CD8-positive, alpha-beta T cell (primary cell): ENCODE measurements at regions of chr12 and their contacts with region 1.

Region 1: GRCh38 chr12:68446893-68447796 is 115.0 kb upstream of the MDM1 start:
- DNase-seq: no peak
- ATAC-seq: no peak
- H3K4me3 ChIP-seq: no peak overlapping the region
- H3K4me3 Mint-ChIP-seq: no peak overlapping the region
- H3K27ac ChIP-seq: peak overlapping the region in 1 of 2 experiments; percentile 63
- H3K27ac Mint-ChIP-seq: no peak overlapping the region
- H3K4me1 ChIP-seq: peaks cover 46% of the 10 kb centered on the region
- H3K4me1 Mint-ChIP-seq: peaks cover 63% of the 10 kb centered on the region
- H3K27me3 ChIP-seq: no peaks in the 10 kb centered on the region
- H3K27me3 Mint-ChIP-seq: no peaks in the 10 kb centered on the region
- CTCF ChIP-seq: no peak

Region 2: GRCh38 chr12:68374307-68374982 is 72.7 kb before region 1 on chr12:
- CTCF ChIA-PET with region 1: no interaction called
- POLR2A ChIA-PET with region 1: no interaction called
- intact Hi-C with region 1: loop called in 1 of 2 experiments (anchors 5 kb)
- DNase-seq: peak in 5 of 9 experiments; percentile 15 to 71 (median 52)
- ATAC-seq: peak; percentile 85
- H3K4me3 ChIP-seq: no peak overlapping the region
- H3K4me3 Mint-ChIP-seq: peak overlapping the region; percentile 32
- H3K27ac ChIP-seq: no peak overlapping the region
- H3K27ac Mint-ChIP-seq: peak overlapping the region; percentile 63
- H3K4me1 ChIP-seq: peaks cover 22% of the 10 kb centered on the region
- H3K4me1 Mint-ChIP-seq: peaks cover 44% of the 10 kb centered on the region
- H3K27me3 ChIP-seq: no peaks in the 10 kb centered on the region
- H3K27me3 Mint-ChIP-seq: no peaks in the 10 kb centered on the region
- CTCF ChIP-seq: no peak

Region 3: DNA sequence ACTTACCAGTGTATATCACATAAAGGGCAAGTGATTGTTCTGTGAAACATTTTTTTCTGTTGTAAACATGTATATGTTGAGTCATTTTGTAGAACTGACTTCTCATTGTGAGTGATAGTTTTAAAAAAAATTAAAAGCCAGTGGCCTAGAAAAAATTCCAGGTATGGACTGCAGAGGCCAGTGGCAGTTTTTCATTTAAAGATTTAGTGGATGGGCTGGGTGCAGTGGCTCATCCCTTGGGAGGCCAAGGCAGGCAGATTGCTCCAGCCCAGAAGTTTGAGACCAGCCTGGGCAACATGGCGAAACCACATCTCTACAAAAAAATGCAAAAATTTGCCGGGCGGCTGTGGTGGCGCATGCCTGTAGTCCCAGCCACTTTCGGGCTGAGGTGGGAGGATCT is 30.3 kb before region 1 on chr12:
- CTCF ChIA-PET with region 1: no interaction called
- POLR2A ChIA-PET with region 1: no interaction called
- intact Hi-C with region 1: no loop called
- DNase-seq: no peak
- ATAC-seq: no peak
- H3K4me3 ChIP-seq: no peak overlapping the region
- H3K4me3 Mint-ChIP-seq: no peak overlapping the region
- H3K27ac ChIP-seq: no peak overlapping the region
- H3K27ac Mint-ChIP-seq: no peak overlapping the region
- H3K4me1 ChIP-seq: peaks cover 7% of the 10 kb centered on the region
- H3K4me1 Mint-ChIP-seq: peaks cover 25% of the 10 kb centered on the region
- H3K27me3 ChIP-seq: no peaks in the 10 kb centered on the region
- H3K27me3 Mint-ChIP-seq: no peaks in the 10 kb centered on the region
- CTCF ChIP-seq: no peak

Region 4: DNA sequence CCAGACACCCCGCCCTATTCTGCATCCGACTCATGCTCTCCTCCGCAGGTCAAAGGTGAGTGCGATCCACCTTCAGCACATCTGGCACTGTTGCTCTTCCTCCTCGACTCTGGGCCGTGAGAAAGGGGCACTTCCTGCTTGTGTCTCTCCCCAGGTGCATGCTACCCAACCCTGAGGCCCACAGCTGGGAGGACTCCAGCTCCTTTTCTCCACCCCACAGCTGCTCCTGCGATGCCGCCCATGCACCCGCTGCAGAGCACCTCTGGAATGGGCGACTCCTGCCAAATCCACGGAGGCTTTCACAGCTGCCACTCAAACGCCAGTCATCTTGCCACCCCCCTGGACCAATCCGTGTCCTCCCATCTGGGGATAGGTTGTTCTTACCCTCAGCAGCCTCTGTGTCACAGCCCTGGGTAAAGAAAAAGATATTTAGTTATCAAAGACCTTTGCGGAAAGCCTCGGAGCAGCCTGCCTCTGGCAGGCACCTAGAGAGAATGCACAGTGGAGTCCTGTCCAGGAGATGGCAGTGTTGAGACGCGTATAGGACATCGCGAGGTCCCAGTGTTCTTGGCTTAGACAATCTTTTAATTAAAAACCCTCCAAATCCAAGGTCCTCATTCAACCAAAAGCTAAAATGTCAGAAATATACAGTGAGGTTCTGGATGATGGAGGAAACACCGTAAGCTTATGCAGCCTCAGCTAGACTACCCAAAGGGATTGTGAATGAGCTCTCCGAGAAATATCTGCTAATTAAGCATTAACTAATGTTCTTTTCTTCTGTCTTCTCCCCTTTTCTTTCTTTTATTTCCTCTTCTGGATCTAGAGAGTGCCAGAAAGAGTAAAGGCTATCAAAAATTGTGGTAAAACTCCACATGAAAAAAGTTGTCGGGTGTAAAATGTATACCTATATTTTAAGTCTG is 1432.2 kb after region 1 on chr12:
- CTCF ChIA-PET with region 1: no interaction called
- POLR2A ChIA-PET with region 1: no interaction called
- intact Hi-C with region 1: no loop called
- DNase-seq: peak; percentile 18 to 73 (median 63)
- ATAC-seq: peak; percentile 73
- H3K4me3 ChIP-seq: no peak overlapping the region
- H3K4me3 Mint-ChIP-seq: no peak overlapping the region
- H3K27ac ChIP-seq: no peak overlapping the region
- H3K27ac Mint-ChIP-seq: no peak overlapping the region
- H3K4me1 ChIP-seq: no peaks in the 10 kb centered on the region
- H3K4me1 Mint-ChIP-seq: peaks cover 4% of the 10 kb centered on the region
- H3K27me3 ChIP-seq: no peaks in the 10 kb centered on the region
- H3K27me3 Mint-ChIP-seq: peaks cover 25% of the 10 kb centered on the region
- CTCF ChIP-seq: peak; percentile 91